Activated naive CD4-positive, alpha-beta T cell treated with anti-CD3 and anti-CD28 coated beads for 36 hours (primary cell): ENCODE measurements at regions of chr3 and their contacts with region 1.

Region 1: GRCh38 chr3:12891985-12892839 is 50.8 kb upstream of the RPL32 start:
- DNase-seq: peak; percentile 63
- H3K4me3 Mint-ChIP-seq: no peak overlapping the region
- H3K27ac Mint-ChIP-seq: no peak overlapping the region
- H3K4me1 Mint-ChIP-seq: peaks cover 5% of the 10 kb centered on the region
- H3K27me3 Mint-ChIP-seq: no peaks in the 10 kb centered on the region

Region 2: GRCh38 chr3:12601072-12601471 is 291.1 kb before region 1 on chr3:
- CTCF ChIA-PET with region 1: no interaction called
- intact Hi-C with region 1: loop called (anchors 5 kb)
- DNase-seq: no peak
- H3K4me3 Mint-ChIP-seq: no peak overlapping the region
- H3K27ac Mint-ChIP-seq: no peak overlapping the region
- H3K4me1 Mint-ChIP-seq: no peaks in the 10 kb centered on the region
- H3K27me3 Mint-ChIP-seq: no peaks in the 10 kb centered on the region

Region 3: DNA sequence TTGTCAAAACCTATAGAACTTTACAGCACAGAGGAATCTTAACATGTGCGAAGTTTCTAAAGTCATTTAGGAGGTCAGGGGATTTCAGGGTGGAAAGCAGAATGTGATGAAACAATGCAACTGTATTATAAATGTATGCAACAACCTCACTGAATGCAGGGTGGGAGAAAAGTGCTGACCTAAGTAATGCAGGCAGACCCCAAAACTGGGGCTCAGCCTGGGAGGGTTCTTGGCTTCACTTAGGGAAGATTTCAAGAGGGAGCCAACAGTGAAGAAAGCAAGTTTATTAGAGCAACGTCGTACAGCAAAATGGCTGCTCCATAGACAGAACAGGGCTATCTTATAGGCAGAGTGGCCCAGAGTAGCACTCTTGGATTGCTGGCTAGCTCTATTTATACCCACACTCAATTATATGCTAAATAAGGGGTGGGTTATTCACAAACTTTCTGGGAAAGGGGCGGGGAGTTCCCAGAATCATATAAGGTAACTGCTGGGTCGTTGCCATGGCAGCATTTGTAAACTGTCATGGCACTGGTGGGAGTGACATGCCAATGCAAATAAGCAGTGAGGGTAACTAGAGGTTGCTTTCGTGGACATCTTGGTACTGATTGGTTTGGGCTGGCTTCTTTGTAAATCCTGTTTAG is 109.9 kb before region 1 on chr3:
- CTCF ChIA-PET with region 1: interaction called, 23 read pairs
- intact Hi-C with region 1: loop called (anchors 1 kb)
- DNase-seq: no peak
- H3K4me3 Mint-ChIP-seq: no peak overlapping the region
- H3K27ac Mint-ChIP-seq: no peak overlapping the region
- H3K4me1 Mint-ChIP-seq: no peaks in the 10 kb centered on the region
- H3K27me3 Mint-ChIP-seq: peaks cover 14% of the 10 kb centered on the region

Region 4: GRCh38 chr3:12875857-12876836 is 16.1 kb before region 1 on chr3:
- CTCF ChIA-PET with region 1: interaction called, 52 read pairs
- intact Hi-C with region 1: no loop called
- DNase-seq: no peak
- H3K4me3 Mint-ChIP-seq: no peak overlapping the region
- H3K27ac Mint-ChIP-seq: no peak overlapping the region
- H3K4me1 Mint-ChIP-seq: no peaks in the 10 kb centered on the region
- H3K27me3 Mint-ChIP-seq: peaks cover 5% of the 10 kb centered on the region

Region 5: DNA sequence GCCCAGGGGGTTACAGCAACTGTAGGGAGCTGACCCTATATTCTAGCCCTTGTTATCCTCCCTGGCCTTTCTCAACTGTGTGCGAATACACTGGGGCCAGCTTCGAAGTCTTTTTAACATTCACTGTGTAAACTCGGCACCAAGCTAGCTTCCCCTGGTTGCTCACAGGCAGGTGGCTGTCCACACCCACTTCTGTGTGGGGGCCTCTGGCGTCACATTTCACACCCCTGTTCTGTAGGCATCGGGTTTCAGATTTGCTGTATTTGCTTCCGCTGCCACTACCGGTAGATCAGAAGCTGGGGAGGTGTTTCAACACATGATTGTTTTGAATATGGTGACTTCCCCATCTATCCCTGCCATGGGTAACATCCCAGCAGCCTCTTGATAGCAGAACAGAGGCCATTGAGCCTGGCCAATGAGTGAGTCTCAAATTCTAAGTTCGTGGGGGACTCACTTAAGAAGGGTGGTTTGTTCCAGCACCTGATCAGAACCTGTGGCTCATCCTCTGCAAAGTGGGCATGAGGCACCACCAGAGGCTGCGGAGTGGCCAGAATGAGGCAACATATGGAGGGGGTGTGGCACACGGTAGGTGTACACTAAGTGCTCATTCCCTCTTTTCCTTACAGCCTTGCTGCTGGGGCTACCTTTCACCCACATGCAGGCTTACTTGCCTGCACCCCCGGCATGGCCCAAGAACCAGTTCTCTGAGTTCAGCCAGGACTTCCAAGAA is 119.5 kb after region 1 on chr3:
- CTCF ChIA-PET with region 1: no interaction called
- intact Hi-C with region 1: no loop called
- DNase-seq: peak; percentile 97
- H3K4me3 Mint-ChIP-seq: peak overlapping the region; percentile 65
- H3K27ac Mint-ChIP-seq: peak overlapping the region; percentile 97
- H3K4me1 Mint-ChIP-seq: peaks cover 79% of the 10 kb centered on the region
- H3K27me3 Mint-ChIP-seq: no peaks in the 10 kb centered on the region